SK-N-SH (cell line): ENCODE measurements at regions of chr2 and their contacts with region 1.

Region 1: DNA sequence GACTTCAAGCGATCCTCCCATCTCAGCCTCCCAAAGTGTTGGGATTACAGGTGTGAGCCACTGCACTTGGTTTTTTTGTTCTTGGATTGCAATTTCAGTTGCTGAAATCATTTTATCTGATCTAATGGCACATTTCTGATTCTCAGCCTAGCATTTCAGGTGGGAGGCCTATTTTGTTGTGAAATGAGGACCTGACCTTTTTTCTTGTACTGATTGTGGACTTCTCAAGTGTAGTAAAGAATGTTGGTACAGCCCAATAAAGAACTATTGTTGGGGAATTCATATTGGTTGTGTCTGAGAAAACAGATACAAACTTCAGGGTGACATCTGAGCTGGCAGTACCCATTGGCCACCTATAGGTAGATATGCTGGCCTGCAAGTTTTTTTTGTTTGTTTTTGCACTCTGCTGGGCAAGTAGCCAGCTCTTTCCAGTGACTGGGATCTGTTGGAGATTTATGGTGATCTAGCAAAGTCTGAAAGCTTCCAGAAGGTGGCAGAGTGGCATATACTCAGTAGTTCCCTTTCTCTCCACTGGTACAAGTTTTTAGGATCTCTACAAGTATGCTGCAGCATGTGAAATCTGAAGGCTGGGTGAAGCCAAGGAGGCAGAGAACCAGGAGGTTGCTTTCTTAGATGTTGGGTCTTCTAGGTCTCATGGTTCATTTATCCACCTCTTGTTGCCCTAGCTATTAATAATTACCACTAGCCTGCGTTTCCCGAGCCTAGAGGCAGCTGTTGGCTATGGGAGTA is 9.2 kb downstream of the COPS7B start:
- DNase-seq: peak; percentile 78
- H3K4me3 ChIP-seq: no peak overlapping the region
- H3K27ac ChIP-seq: peak overlapping the region; percentile 2 to 91; a peak in 3 of 4 replicates
- H3K4me1 ChIP-seq: peaks cover 0 to 29% of the 10 kb centered on the region in 2 experiments; a peak in 2 of 4 replicates
- H3K27me3 ChIP-seq: no peaks in the 10 kb centered on the region
- CTCF ChIP-seq: peak; percentile 63
- EP300 ChIP-seq: peak in 1 of 2 experiments; percentile 71; a peak in 2 of 4 replicates
- RAD21 ChIP-seq: peak; percentile 28; the same call in 1 of the 2 replicates

Region 2: DNA sequence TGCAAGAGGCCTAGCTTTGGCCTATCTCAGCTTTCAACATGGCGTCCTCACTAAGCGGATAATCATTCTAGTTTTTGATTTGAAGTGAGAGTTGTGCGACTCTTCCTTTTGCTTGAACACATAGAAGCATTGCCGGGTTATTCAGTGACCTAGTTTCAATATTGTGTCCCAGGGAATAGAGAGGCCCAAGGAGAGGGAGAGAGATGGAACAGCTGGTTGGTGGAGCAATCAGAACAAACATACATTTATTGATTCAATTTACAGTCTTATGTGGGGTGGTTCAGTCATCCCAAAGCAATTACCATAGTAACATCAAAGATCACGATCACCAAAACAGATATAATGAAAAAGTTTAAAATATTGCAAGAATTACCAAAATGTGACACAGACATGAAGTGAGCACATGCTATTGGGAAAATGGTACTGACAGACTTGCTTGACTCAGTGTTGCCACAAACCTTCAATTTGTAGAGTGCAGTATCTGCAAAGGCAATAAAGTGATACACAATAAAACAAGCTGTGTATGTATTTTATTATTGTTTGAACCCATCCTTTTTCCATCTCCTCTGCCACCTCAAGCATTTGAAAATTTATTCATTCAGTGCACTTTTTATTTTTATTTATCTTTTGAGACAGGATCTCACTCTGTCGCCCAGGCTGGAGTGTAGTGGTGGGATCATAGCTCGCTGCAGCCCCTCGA is 21.0 kb after region 1 on chr2:
- CTCF ChIA-PET with region 1: interaction called, 22 read pairs
- POLR2A ChIA-PET with region 1: no interaction called
- DNase-seq: no peak
- H3K4me3 ChIP-seq: no peak overlapping the region
- H3K27ac ChIP-seq: no peak overlapping the region
- H3K4me1 ChIP-seq: no peaks in the 10 kb centered on the region
- H3K27me3 ChIP-seq: no peaks in the 10 kb centered on the region; the same call in 1 of the 2 replicates
- CTCF ChIP-seq: no peak
- EP300 ChIP-seq: no peak
- RAD21 ChIP-seq: no peak

Region 3: GRCh38 chr2:232008907-232009638 is 213.6 kb after region 1 on chr2:
- CTCF ChIA-PET with region 1: no interaction called
- POLR2A ChIA-PET with region 1: no interaction called
- DNase-seq: no peak
- H3K4me3 ChIP-seq: no peak overlapping the region
- H3K27ac ChIP-seq: no peak overlapping the region
- H3K4me1 ChIP-seq: peaks cover 11% of the 10 kb centered on the region in 2 experiments
- H3K27me3 ChIP-seq: no peaks in the 10 kb centered on the region
- CTCF ChIP-seq: no peak
- EP300 ChIP-seq: no peak
- RAD21 ChIP-seq: no peak